ENCODE measurements at regions of chr3 and their contacts with region 1.

Region 1: DNA sequence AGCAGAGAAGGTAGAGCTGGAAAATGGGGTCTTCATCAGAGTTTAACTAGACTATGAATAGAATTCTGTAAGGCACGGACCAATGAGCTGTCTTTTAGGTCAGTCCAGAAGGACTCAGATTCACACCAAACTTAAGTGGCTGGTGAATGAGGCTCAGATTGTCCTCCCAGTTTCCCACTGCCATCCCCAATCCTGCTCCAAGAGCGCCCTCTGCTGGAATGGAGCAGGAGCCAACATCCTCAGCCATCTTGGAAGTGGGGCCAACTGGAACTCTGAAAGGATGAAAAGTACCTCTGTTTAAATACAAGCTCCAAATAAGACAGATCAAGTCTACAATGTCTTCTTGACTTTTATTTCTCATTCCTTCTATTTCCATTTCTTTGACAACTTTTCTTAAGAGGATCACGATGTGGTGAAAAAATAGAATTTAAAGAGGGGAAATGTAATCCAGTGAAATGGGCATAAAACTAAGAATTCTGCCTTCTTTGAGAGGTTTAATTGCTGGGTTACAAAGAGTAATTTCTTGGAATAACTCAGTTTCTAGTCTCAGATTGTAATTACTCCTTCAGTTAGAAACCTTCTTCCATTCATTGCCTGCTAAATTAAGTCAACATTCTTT is 217.1 kb upstream of the TPRG1 start:
- DNase-seq: peak; percentile 83
- ATAC-seq: peak; percentile 93
- H3K4me3 Mint-ChIP-seq: no peak overlapping the region
- H3K27ac Mint-ChIP-seq: no peak overlapping the region
- H3K4me1 Mint-ChIP-seq: peaks cover 11% of the 10 kb centered on the region
- H3K27me3 Mint-ChIP-seq: no peaks in the 10 kb centered on the region
- CTCF ChIP-seq: peak; percentile 95

Region 2: GRCh38 chr3:188749010-188749617 is 205.6 kb before region 1 on chr3:
- CTCF ChIA-PET with region 1: interaction called, 19 read pairs
- POLR2A ChIA-PET with region 1: no interaction called
- DNase-seq: peak; percentile 60
- ATAC-seq: peak; percentile 95
- H3K4me3 Mint-ChIP-seq: no peak overlapping the region
- H3K27ac Mint-ChIP-seq: no peak overlapping the region
- H3K4me1 Mint-ChIP-seq: no peaks in the 10 kb centered on the region
- H3K27me3 Mint-ChIP-seq: no peaks in the 10 kb centered on the region
- CTCF ChIP-seq: peak; percentile 76

Region 3: GRCh38 chr3:188830893-188831292 is 123.8 kb before region 1 on chr3:
- CTCF ChIA-PET with region 1: interaction called, 18 read pairs
- POLR2A ChIA-PET with region 1: no interaction called
- DNase-seq: no peak
- ATAC-seq: peak; percentile 40
- H3K4me3 Mint-ChIP-seq: no peak overlapping the region
- H3K27ac Mint-ChIP-seq: no peak overlapping the region
- H3K4me1 Mint-ChIP-seq: no peaks in the 10 kb centered on the region
- H3K27me3 Mint-ChIP-seq: no peaks in the 10 kb centered on the region
- CTCF ChIP-seq: no peak

Region 4: GRCh38 chr3:188929137-188929536 is 25.6 kb before region 1 on chr3:
- CTCF ChIA-PET with region 1: interaction called, 10 read pairs
- POLR2A ChIA-PET with region 1: no interaction called
- DNase-seq: no peak
- ATAC-seq: peak; percentile 81
- H3K4me3 Mint-ChIP-seq: no peak overlapping the region
- H3K27ac Mint-ChIP-seq: no peak overlapping the region
- H3K4me1 Mint-ChIP-seq: peaks cover 10% of the 10 kb centered on the region
- H3K27me3 Mint-ChIP-seq: no peaks in the 10 kb centered on the region
- CTCF ChIP-seq: no peak

Region 5: DNA sequence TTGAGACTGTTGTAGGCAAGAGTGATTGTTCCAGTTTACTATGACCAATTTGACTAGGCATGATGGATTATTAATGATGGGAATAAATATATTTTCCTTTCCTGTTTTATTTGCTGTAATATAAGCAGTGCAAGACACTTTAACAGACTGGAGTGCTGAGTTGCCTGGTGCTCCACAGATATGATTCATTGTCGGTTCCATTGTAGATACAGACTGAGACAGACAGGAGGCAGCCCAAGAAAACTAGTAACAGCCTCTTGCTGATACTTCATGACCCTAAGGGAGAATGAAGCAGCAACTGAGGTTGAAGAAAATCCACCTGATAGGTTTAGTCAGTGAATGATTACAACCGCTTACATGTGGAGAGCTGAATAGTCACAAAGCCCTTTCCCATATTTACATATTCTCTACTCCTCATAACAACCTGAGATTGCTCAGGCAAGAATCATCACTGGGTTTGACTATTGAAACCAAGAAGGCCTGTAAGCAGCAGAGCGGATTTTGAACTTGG is 18.0 kb before region 1 on chr3:
- CTCF ChIA-PET with region 1: interaction called, 10 read pairs
- POLR2A ChIA-PET with region 1: no interaction called
- DNase-seq: no peak
- ATAC-seq: peak; percentile 41
- H3K4me3 Mint-ChIP-seq: no peak overlapping the region
- H3K27ac Mint-ChIP-seq: no peak overlapping the region
- H3K4me1 Mint-ChIP-seq: peaks cover 25% of the 10 kb centered on the region
- H3K27me3 Mint-ChIP-seq: no peaks in the 10 kb centered on the region; the same call in 1 of the 2 replicates
- CTCF ChIP-seq: no peak

Region 6: DNA sequence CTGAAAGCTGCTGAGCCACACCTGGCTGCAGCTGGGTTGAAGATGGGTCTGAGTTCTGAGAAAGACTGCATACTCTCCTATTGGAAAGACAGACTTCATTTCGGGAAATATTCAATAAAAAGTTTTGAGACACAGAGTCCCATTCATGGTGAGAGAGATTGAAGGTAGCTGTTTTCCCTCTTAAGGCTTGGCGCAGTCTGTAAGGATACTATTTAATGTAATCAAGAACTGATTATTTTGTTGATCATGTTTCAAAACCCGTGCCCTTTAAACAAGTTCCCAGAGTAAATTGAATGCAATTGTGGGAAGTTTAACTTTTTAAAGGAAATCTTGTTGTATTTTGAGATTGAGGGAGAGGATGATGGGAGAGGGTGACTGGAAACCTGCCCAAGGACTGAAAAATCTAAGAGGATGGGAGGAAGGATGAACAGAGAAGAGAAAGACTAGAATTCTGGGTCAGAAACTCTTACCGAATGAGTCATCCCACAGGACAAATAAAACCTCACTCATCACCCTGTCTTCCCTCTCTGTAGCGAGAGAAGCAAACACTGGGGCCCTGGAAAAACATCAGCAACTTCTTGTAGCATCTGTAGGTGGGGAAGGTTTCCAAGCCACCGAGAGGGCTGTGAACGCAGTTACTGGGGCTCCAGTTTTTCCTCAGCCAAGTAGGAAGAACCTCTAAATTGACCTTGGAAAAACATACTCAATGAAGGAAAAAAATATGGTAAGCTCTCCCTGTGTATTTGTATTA is 23.9 kb after region 1 on chr3:
- CTCF ChIA-PET with region 1: no interaction called
- POLR2A ChIA-PET with region 1: no interaction called
- DNase-seq: no peak
- ATAC-seq: no peak
- H3K4me3 Mint-ChIP-seq: no peak overlapping the region
- H3K27ac Mint-ChIP-seq: no peak overlapping the region
- H3K4me1 Mint-ChIP-seq: peaks cover 9% of the 10 kb centered on the region
- H3K27me3 Mint-ChIP-seq: no peaks in the 10 kb centered on the region
- CTCF ChIP-seq: no peak

Region 7: DNA sequence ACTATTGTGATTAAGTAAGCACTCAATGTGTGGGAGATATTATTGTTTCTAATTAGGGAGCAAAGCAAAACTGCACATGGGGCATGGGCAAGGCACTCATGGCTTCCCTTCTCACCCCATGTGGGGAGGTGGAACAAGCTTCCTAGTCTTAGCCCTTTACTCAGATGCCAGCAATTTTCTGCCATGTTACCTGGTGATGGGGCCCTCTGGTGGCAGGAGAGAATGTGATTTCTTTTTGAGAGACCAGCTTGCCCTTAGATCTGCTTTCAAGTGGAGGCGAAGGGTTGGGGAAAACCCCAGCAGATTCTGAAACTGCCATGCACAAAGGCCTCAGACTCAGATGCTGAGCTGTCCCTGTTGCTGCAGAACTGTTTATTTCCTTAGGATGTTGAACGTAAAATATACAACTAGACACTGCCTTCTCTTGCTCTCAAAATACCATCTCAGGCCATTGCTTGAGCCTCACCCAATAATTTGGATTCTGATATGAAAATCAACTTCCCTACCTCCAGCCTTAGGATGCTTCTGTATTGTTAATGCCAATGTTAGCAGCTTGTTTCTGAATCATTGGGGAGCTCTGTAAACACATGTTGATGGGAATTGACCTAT is 86.9 kb after region 1 on chr3:
- CTCF ChIA-PET with region 1: interaction called, 18 read pairs
- POLR2A ChIA-PET with region 1: no interaction called
- DNase-seq: peak; percentile 67
- ATAC-seq: peak; percentile 96
- H3K4me3 Mint-ChIP-seq: no peak overlapping the region
- H3K27ac Mint-ChIP-seq: no peak overlapping the region
- H3K4me1 Mint-ChIP-seq: 0 out of 2 replicates have a peak, but pooled peaks cover 2% of the 10 kb centered on the region
- H3K27me3 Mint-ChIP-seq: no peaks in the 10 kb centered on the region
- CTCF ChIP-seq: peak; percentile 40; the same call in 1 of the 2 replicates

Region 8: DNA sequence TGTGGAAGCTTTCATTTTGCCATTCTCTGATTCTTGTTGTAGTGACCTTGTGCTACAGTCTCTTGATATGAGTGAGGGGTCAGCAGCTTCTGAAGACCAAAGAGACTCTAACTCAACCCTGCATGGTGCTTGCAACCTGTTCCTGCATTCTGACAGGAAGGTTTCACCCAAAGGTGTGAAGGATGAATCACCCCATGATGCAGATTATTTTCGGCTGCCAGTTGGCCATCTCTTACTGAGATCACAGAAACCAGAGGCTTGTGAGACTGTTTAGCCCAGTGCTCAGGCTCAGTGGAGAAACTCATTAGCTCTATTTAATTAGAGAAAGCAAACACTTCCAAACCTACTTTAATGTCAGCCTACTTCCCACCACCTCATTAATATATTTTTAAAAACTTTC is 187.8 kb after region 1 on chr3:
- CTCF ChIA-PET with region 1: no interaction called
- POLR2A ChIA-PET with region 1: no interaction called
- DNase-seq: no peak
- ATAC-seq: no peak
- H3K4me3 Mint-ChIP-seq: no peak overlapping the region
- H3K27ac Mint-ChIP-seq: no peak overlapping the region
- H3K4me1 Mint-ChIP-seq: peaks cover 4% of the 10 kb centered on the region; the same call in 1 of the 2 replicates
- H3K27me3 Mint-ChIP-seq: no peaks in the 10 kb centered on the region
- CTCF ChIP-seq: no peak

Region 9: DNA sequence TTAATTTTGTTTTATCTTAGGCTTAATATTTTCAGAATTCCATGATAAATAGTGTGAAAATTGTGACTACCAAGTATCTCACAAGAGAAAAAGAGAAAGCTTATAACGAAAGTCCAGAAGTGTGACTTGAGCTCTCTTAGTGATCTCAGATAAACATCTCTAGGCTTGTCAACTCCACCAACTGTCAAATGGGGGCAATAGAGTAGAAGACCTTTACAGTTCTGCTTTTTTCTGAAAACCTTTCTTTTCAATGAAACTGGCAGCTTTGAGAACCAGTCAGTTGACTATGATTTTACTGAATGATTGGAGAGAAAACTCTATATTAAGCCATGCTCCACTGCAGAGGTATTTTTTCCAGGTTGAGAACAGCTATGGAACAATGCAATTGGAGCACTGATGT is 557.3 kb after region 1 on chr3:
- CTCF ChIA-PET with region 1: no interaction called
- POLR2A ChIA-PET with region 1: no interaction called
- DNase-seq: no peak
- ATAC-seq: no peak
- H3K4me3 Mint-ChIP-seq: no peak overlapping the region
- H3K27ac Mint-ChIP-seq: no peak overlapping the region
- H3K4me1 Mint-ChIP-seq: peaks cover 17% of the 10 kb centered on the region
- H3K27me3 Mint-ChIP-seq: no peaks in the 10 kb centered on the region
- CTCF ChIP-seq: no peak